ENCODE measurements at regions of chr3 and their contacts with region 1.

Region 1: GRCh38 chr3:58305882-58306711 is at the starts of genes HTD2 and RPP14:
- DNase-seq: peak; percentile 88 to 96 (median 90)
- ATAC-seq: peak; percentile 95
- H3K4me3 ChIP-seq: peak within 1 kb of the TSS; percentile 80
- H3K27ac ChIP-seq: peak within 1 kb of the TSS; percentile 96
- H3K4me1 ChIP-seq: peaks cover 0 to 7% of the 10 kb centered on the region in 2 experiments; a peak in 3 of 5 replicates
- H3K27me3 ChIP-seq: no peaks in the 10 kb centered on the region
- CTCF ChIP-seq: peak; percentile 87 to 92 (median 91)
- EP300 ChIP-seq: peak; percentile 28; the same call in 1 of the 2 replicates
- POLR2A ChIP-seq: peak; percentile 86
- RAD21 ChIP-seq: peak; percentile 27 to 55; a peak in 3 of 4 replicates
- polyA plus RNA-seq, gene HTD2: 13.9 to 22.8 TPM
- polyA plus RNA-seq, gene RPP14: 20.5 to 20.8 TPM

Region 2: GRCh38 chr3:58188173-58188564 is 117.9 kb before region 1 on chr3:
- CTCF ChIA-PET with region 1: interaction called, 27 read pairs
- POLR2A ChIA-PET with region 1: no interaction called
- in situ Hi-C with region 1: loop called (anchors 5 kb)
- intact Hi-C with region 1: no loop called
- DNase-seq: no peak
- ATAC-seq: no peak
- H3K4me3 ChIP-seq: no peak overlapping the region
- H3K27ac ChIP-seq: no peak overlapping the region
- H3K4me1 ChIP-seq: peaks cover 4 to 16% of the 10 kb centered on the region in 2 experiments
- H3K27me3 ChIP-seq: no peaks in the 10 kb centered on the region
- CTCF ChIP-seq: no peak
- EP300 ChIP-seq: no peak
- POLR2A ChIP-seq: no peak
- RAD21 ChIP-seq: no peak

Region 3: GRCh38 chr3:58317811-58318210 is 11.7 kb after region 1 on chr3:
- CTCF ChIA-PET with region 1: no interaction called
- POLR2A ChIA-PET with region 1: interaction called, 18 read pairs
- in situ Hi-C with region 1: no loop called
- intact Hi-C with region 1: no loop called
- DNase-seq: no peak
- ATAC-seq: no peak
- H3K4me3 ChIP-seq: no peak overlapping the region
- H3K27ac ChIP-seq: no peak overlapping the region
- H3K4me1 ChIP-seq: peaks cover 0 to under 1% of the 10 kb centered on the region in 2 experiments; a peak in 2 of 5 replicates
- H3K27me3 ChIP-seq: no peaks in the 10 kb centered on the region
- CTCF ChIP-seq: no peak
- EP300 ChIP-seq: no peak
- POLR2A ChIP-seq: no peak
- RAD21 ChIP-seq: no peak

Region 4: DNA sequence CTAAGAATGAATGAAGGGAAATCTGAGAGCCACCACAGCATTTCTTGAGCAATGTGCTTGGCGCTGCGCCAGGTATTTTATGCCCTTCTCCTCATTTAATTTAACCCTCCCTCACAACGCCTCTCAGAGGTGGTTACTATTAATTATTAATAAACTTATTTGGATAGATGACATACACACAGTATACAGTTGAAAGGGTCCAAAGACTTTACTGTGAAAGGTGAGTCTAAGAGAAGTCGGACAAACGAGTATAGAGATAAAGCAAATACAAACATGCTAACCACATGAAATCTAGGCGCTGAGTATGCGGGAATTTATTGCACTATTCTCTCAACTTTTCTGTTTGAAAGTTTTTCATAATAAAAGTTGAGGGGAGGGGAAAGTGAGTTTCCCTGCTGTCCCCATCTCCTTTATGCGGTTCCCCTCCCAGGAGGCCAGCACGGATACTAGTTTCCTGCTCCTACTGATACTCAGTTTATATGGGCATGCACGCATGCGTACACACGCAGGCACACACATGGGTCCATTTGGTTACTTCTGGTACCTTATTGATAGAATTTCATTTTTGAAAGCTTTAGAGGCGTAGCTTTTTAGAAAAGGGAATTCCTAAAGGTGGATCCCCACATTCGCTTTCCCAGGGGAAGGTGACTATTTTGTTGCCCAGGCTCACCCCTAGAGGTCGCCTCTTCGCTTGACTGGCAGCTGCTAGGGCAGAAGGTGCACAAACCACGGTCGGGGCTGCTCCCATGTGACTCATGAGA is 157.3 kb after region 1 on chr3:
- CTCF ChIA-PET with region 1: no interaction called
- POLR2A ChIA-PET with region 1: no interaction called
- in situ Hi-C with region 1: no loop called
- intact Hi-C with region 1: no loop called
- DNase-seq: peak; percentile 67 to 75 (median 70)
- ATAC-seq: peak; percentile 96
- H3K4me3 ChIP-seq: no peak overlapping the region
- H3K27ac ChIP-seq: no peak overlapping the region
- H3K4me1 ChIP-seq: peaks cover 0 to 2% of the 10 kb centered on the region in 2 experiments; a peak in 1 of 5 replicates
- H3K27me3 ChIP-seq: 0 out of 5 replicates have a peak, but pooled peaks cover 0 to 2% of the 10 kb centered on the region in 2 experiments
- CTCF ChIP-seq: peak; percentile 65 to 78 (median 74)
- EP300 ChIP-seq: no peak
- POLR2A ChIP-seq: no peak
- RAD21 ChIP-seq: peak; percentile 59 to 68

Region 5: GRCh38 chr3:59143447-59143846 is 837.4 kb after region 1 on chr3:
- CTCF ChIA-PET with region 1: no interaction called
- POLR2A ChIA-PET with region 1: no interaction called
- in situ Hi-C with region 1: no loop called
- intact Hi-C with region 1: no loop called
- DNase-seq: no peak
- ATAC-seq: no peak
- H3K4me3 ChIP-seq: no peak overlapping the region
- H3K27ac ChIP-seq: no peak overlapping the region
- H3K4me1 ChIP-seq: no peaks in the 10 kb centered on the region
- H3K27me3 ChIP-seq: no peaks in the 10 kb centered on the region
- CTCF ChIP-seq: peak in 1 of 3 experiments; percentile 16; a peak in 1 of 6 replicates
- EP300 ChIP-seq: no peak
- POLR2A ChIP-seq: no peak
- RAD21 ChIP-seq: no peak